GM12878 (cell line): ENCODE measurements at regions of chr3 and their contacts with region 1.

Region 1: GRCh38 chr3:112531358-112531781 is 30.4 kb downstream of the ATG3 start:
- DNase-seq: no peak
- ATAC-seq: peak; percentile 39; the same call in 2 of the 3 replicates
- H3K4me3 ChIP-seq: no peak overlapping the region
- H3K27ac ChIP-seq: no peak overlapping the region
- H3K4me1 ChIP-seq: no peaks in the 10 kb centered on the region
- H3K27me3 ChIP-seq: no peaks in the 10 kb centered on the region
- CTCF ChIP-seq: peak; percentile 21 to 43 (median 41); a peak in 3 of 6 replicates
- EP300 ChIP-seq: no peak
- POLR2A ChIP-seq: no peak
- RAD21 ChIP-seq: peak; percentile 36; the same call in 1 of the 2 replicates

Region 2: DNA sequence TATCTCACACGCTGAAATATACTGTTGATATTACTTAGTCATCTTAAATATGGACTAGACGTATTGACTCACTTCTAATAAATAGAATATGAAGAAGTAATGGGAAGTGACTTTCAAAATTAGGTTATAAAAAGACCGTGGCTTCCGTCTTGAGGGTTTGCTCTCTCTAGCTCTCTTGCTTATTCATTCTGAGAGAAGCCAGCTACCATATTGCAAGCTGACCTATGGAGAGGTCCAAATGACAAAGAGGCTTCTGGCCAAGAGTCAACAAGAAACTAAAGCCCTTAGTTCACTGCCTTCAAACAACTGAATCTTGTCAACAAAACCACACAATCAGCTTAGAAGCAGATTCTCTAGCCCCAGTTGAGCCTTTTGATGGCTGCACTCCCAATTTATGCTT is 283.5 kb before region 1 on chr3:
- CTCF ChIA-PET with region 1: no interaction called
- POLR2A ChIA-PET with region 1: no interaction called
- RAD21 ChIA-PET with region 1: no interaction called
- SMC1A ChIA-PET with region 1: no interaction called
- in situ Hi-C with region 1: no loop called
- intact Hi-C with region 1: no loop called
- DNase-seq: peak; percentile 53
- ATAC-seq: peak; percentile 96
- H3K4me3 ChIP-seq: no peak overlapping the region
- H3K27ac ChIP-seq: peak overlapping the region; percentile 42; the same call in 1 of the 2 replicates
- H3K4me1 ChIP-seq: peaks cover 26% of the 10 kb centered on the region
- H3K27me3 ChIP-seq: no peaks in the 10 kb centered on the region
- CTCF ChIP-seq: no peak
- EP300 ChIP-seq: no peak; a peak in 1 of 4 replicates
- POLR2A ChIP-seq: no peak
- RAD21 ChIP-seq: no peak

Region 3: DNA sequence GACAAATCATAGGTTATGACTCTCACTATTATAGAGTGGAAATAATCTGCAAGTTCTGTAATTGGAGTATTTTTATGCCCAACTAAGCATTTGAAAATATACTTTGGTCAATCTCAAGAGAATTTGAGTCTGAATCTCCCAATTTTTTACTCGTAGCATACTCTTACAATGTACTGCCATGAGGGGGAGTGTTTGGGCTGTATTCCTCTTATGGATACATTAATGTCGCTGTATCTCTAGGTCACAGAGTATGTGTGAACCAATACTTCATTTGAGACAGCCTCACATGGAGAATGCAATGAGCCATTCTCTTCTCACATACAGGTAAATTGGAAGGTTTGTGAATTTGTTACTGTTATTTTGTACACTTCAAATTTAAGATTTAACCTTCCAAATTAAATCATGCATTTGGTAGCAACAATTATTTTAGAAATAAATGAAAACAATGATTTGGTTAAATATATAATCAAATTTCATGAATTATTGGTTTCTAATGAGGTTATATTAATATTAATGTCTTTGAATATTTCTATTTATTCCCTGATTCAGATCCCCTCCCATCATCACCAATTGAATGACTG is 203.9 kb before region 1 on chr3:
- CTCF ChIA-PET with region 1: interaction called, 10 read pairs
- POLR2A ChIA-PET with region 1: no interaction called
- RAD21 ChIA-PET with region 1: interaction called, 6 read pairs
- SMC1A ChIA-PET with region 1: interaction called, 15 read pairs
- in situ Hi-C with region 1: no loop called
- intact Hi-C with region 1: loop called (anchors 2 kb)
- DNase-seq: peak; percentile 79
- ATAC-seq: peak; percentile 100
- H3K4me3 ChIP-seq: no peak overlapping the region
- H3K27ac ChIP-seq: no peak overlapping the region
- H3K4me1 ChIP-seq: no peaks in the 10 kb centered on the region
- H3K27me3 ChIP-seq: no peaks in the 10 kb centered on the region
- CTCF ChIP-seq: peak; percentile 60 to 82 (median 64)
- EP300 ChIP-seq: no peak
- POLR2A ChIP-seq: no peak
- RAD21 ChIP-seq: peak; percentile 98